MCF 10A (cell line): ENCODE measurements at regions of chr20 and their contacts with region 1.

Region 1: GRCh38 chr20:58209652-58210397 is 18.6 kb downstream of the ANKRD60 start:
- DNase-seq: peak; percentile 65
- H3K4me3 Mint-ChIP-seq: no peak overlapping the region
- H3K27ac Mint-ChIP-seq: peak overlapping the region; percentile 76
- H3K4me1 Mint-ChIP-seq: no peaks in the 10 kb centered on the region
- H3K27me3 Mint-ChIP-seq: peaks cover 51% of the 10 kb centered on the region
- CTCF ChIP-seq: peak; percentile 100

Region 2: DNA sequence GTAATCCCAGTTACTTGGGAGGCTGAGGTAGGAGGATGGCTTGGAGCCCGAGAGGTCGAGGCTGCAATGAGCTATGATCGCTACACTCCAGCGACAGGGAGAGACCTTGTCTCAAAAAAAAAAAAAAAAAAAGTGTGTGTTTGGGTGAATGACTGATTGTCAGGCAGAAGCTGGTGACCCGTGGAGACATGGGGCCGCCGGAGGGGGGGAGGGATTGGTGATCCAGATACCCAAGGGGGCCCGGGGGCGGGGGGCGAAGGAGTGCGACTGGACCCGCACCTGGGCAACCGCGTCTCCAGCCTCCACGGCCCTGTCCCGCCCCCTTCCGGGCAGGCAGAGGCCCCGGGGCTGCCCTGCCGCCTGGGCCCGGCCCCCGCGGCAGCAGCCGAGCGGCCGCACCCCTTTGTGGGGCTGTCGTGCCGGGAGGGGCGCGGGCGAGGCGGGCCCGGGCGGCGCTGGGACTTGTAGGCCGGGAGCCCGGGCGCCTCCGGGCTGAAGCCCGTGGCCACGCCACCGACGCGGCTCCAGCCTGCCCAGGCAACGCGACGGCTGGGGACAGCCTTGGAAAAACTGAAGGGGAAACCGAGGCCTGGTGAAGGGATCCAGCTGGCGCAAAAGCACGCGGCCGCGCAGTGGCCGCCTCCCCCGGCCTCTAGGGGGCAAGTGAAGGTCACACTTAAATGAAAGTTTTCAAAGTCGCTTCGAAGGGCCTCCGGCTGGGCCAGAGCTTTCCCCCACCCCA is 820.7 kb before region 1 on chr20:
- CTCF ChIA-PET with region 1: interaction called, 3 read pairs
- POLR2A ChIA-PET with region 1: no interaction called
- intact Hi-C with region 1: loop called (anchors 10 kb)
- DNase-seq: no peak
- H3K4me3 Mint-ChIP-seq: no peak overlapping the region
- H3K27ac Mint-ChIP-seq: no peak overlapping the region
- H3K4me1 Mint-ChIP-seq: no peaks in the 10 kb centered on the region
- H3K27me3 Mint-ChIP-seq: no peaks in the 10 kb centered on the region
- CTCF ChIP-seq: peak; percentile 25

Region 3: DNA sequence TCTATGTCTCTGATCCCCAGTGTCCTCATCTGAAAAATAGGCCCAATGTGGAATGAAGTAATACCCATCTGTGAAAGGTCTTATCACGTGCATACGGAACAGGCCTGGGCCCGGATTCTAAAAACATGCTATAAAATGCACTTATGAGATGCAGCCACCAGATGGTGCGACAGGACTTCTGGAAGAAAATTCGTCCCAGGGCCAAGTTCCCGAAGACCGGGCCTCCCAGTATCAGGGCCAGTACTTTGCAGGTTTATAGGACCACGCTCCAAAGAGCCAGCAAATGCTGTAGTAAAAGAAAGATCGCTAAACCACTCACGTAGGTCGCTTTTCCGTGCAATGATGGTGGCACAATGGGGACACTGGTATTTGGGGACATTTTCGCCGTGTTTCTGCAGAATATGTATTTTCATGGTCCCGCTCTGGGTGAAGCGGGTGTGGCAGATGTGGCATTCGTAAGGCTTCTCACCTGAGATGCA is 695.5 kb before region 1 on chr20:
- CTCF ChIA-PET with region 1: interaction called, 81 read pairs
- POLR2A ChIA-PET with region 1: no interaction called
- intact Hi-C with region 1: loop called (anchors 1 kb)
- DNase-seq: peak; percentile 67
- H3K4me3 Mint-ChIP-seq: no peak overlapping the region
- H3K27ac Mint-ChIP-seq: no peak overlapping the region
- H3K4me1 Mint-ChIP-seq: no peaks in the 10 kb centered on the region
- H3K27me3 Mint-ChIP-seq: peaks cover 30% of the 10 kb centered on the region
- CTCF ChIP-seq: peak; percentile 79

Region 4: DNA sequence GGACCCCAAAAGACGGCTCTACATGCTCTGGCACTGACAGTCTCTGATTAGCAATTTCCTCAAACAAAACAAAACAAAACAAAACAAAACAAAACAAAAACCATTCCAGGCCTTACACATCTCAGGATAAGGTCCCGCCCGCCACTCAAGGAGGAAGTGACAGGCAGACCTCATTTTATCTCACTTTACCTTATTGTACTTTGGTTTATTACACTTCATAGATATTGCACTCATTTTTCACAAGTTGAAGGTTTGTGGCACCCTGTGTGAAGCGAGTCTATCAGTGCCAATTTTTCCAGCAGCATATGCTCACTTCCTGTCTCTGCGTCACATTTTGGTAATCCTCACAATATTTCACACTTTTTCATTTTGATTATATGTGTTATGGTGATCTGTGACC is 604.8 kb before region 1 on chr20:
- CTCF ChIA-PET with region 1: interaction called, 435 read pairs
- POLR2A ChIA-PET with region 1: no interaction called
- intact Hi-C with region 1: no loop called
- DNase-seq: no peak
- H3K4me3 Mint-ChIP-seq: no peak overlapping the region
- H3K27ac Mint-ChIP-seq: no peak overlapping the region
- H3K4me1 Mint-ChIP-seq: no peaks in the 10 kb centered on the region
- H3K27me3 Mint-ChIP-seq: peaks cover 56% of the 10 kb centered on the region
- CTCF ChIP-seq: no peak

Region 5: GRCh38 chr20:58179432-58180099 is 30.3 kb before region 1 on chr20:
- CTCF ChIA-PET with region 1: interaction called, 17 read pairs
- POLR2A ChIA-PET with region 1: interaction called, 4 read pairs
- intact Hi-C with region 1: no loop called
- DNase-seq: peak; percentile 40
- H3K4me3 Mint-ChIP-seq: no peak overlapping the region
- H3K27ac Mint-ChIP-seq: no peak overlapping the region
- H3K4me1 Mint-ChIP-seq: no peaks in the 10 kb centered on the region
- H3K27me3 Mint-ChIP-seq: peaks cover 32% of the 10 kb centered on the region
- CTCF ChIP-seq: peak; percentile 99